ENCODE measurements at regions of chr11 and their contacts with region 1.

Region 1: GRCh38 chr11:37718431-37718999 is 1120.5 kb upstream of the RAG2 start:
- DNase-seq: no peak
- ATAC-seq: no peak
- H3K4me3 ChIP-seq: no peak overlapping the region
- H3K4me3 Mint-ChIP-seq: no peak overlapping the region
- H3K27ac ChIP-seq: no peak overlapping the region
- H3K27ac Mint-ChIP-seq: no peak overlapping the region
- H3K4me1 ChIP-seq: no peaks in the 10 kb centered on the region
- H3K4me1 Mint-ChIP-seq: no peaks in the 10 kb centered on the region
- H3K27me3 ChIP-seq: no peaks in the 10 kb centered on the region
- H3K27me3 Mint-ChIP-seq: no peaks in the 10 kb centered on the region
- CTCF ChIP-seq: no peak

Region 2: GRCh38 chr11:37182031-37182430 is 536.5 kb before region 1 on chr11:
- CTCF ChIA-PET with region 1: no interaction called
- POLR2A ChIA-PET with region 1: no interaction called
- intact Hi-C with region 1: no loop called
- DNase-seq: no peak
- ATAC-seq: no peak
- H3K4me3 ChIP-seq: no peak overlapping the region
- H3K4me3 Mint-ChIP-seq: no peak overlapping the region
- H3K27ac ChIP-seq: no peak overlapping the region
- H3K27ac Mint-ChIP-seq: no peak overlapping the region
- H3K4me1 ChIP-seq: no peaks in the 10 kb centered on the region
- H3K4me1 Mint-ChIP-seq: no peaks in the 10 kb centered on the region
- H3K27me3 ChIP-seq: no peaks in the 10 kb centered on the region
- H3K27me3 Mint-ChIP-seq: no peaks in the 10 kb centered on the region
- CTCF ChIP-seq: no peak

Region 3: DNA sequence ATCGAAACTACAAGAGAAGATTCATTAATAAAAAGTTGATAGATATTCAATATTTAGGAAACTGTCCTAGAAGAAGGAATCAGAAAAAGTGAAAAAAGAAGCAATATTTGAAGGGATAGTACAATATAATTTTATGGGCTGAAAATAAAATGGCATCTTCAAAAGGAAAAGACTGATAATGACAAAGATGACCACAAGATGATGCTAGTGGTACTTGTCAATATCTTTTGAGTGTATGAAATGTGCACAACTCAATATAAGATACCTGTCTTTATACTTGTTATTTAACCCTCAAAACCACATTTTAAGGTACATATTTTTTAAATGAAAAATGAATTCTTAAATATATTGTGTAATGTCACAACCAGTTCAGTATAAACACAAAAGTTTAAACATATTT is 60.9 kb before region 1 on chr11:
- CTCF ChIA-PET with region 1: no interaction called
- POLR2A ChIA-PET with region 1: no interaction called
- intact Hi-C with region 1: no loop called
- DNase-seq: no peak
- ATAC-seq: no peak
- H3K4me3 ChIP-seq: no peak overlapping the region
- H3K4me3 Mint-ChIP-seq: no peak overlapping the region
- H3K27ac ChIP-seq: no peak overlapping the region
- H3K27ac Mint-ChIP-seq: no peak overlapping the region
- H3K4me1 ChIP-seq: no peaks in the 10 kb centered on the region
- H3K4me1 Mint-ChIP-seq: no peaks in the 10 kb centered on the region
- H3K27me3 ChIP-seq: no peaks in the 10 kb centered on the region
- H3K27me3 Mint-ChIP-seq: no peaks in the 10 kb centered on the region
- CTCF ChIP-seq: no peak

Region 4: GRCh38 chr11:37755521-37755920 is 37.0 kb after region 1 on chr11:
- CTCF ChIA-PET with region 1: no interaction called
- POLR2A ChIA-PET with region 1: no interaction called
- intact Hi-C with region 1: loop called in 1 of 2 experiments (anchors 1 kb)
- DNase-seq: no peak
- ATAC-seq: no peak
- H3K4me3 ChIP-seq: no peak overlapping the region
- H3K4me3 Mint-ChIP-seq: no peak overlapping the region
- H3K27ac ChIP-seq: no peak overlapping the region
- H3K27ac Mint-ChIP-seq: no peak overlapping the region
- H3K4me1 ChIP-seq: no peaks in the 10 kb centered on the region
- H3K4me1 Mint-ChIP-seq: no peaks in the 10 kb centered on the region
- H3K27me3 ChIP-seq: no peaks in the 10 kb centered on the region
- H3K27me3 Mint-ChIP-seq: no peaks in the 10 kb centered on the region
- CTCF ChIP-seq: no peak

Region 5: DNA sequence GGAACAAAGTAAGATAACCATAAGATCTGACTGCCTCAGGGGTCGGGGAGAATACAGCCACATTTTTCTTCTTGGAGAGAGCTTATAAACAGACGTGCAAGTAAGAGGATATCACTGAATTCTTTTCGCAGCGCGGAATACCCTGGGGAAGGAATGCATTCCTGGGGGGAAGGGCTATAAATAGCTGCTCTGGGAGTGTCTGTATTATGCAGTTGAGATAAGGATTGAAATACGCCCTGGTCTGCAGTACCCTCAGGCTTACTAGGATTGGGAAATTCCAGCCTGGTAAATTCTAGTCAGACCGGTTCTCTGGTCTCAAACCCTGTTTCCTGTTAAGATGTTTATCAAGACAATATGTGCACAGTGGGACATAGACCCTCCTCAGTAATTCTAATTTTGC is 371.2 kb after region 1 on chr11:
- CTCF ChIA-PET with region 1: no interaction called
- POLR2A ChIA-PET with region 1: no interaction called
- intact Hi-C with region 1: no loop called
- DNase-seq: no peak
- ATAC-seq: no peak
- H3K4me3 ChIP-seq: no peak overlapping the region
- H3K4me3 Mint-ChIP-seq: no peak overlapping the region
- H3K27ac ChIP-seq: no peak overlapping the region
- H3K27ac Mint-ChIP-seq: no peak overlapping the region
- H3K4me1 ChIP-seq: no peaks in the 10 kb centered on the region
- H3K4me1 Mint-ChIP-seq: no peaks in the 10 kb centered on the region
- H3K27me3 ChIP-seq: no peaks in the 10 kb centered on the region
- H3K27me3 Mint-ChIP-seq: no peaks in the 10 kb centered on the region
- CTCF ChIP-seq: no peak

Measured in CD8-positive, alpha-beta T cell (primary cell).